T-cell (primary cell): ENCODE measurements at regions of chr22 and their contacts with region 1.

Region 1: GRCh38 chr22:24230911-24231656 is 13.8 kb downstream of the GGT5 start:
- DNase-seq: peak in 34 of 35 experiments; percentile 28 to 71 (median 52)
- ATAC-seq: peak; percentile 66 to 73 (median 70)
- H3K4me3 ChIP-seq: no peak overlapping the region
- H3K4me3 Mint-ChIP-seq: no peak overlapping the region
- H3K27ac ChIP-seq: no peak overlapping the region
- H3K27ac Mint-ChIP-seq: peak overlapping the region in 1 of 2 donors; percentile 49
- H3K4me1 ChIP-seq: peaks cover 0 to 4% of the 10 kb centered on the region in 2 experiments
- H3K4me1 Mint-ChIP-seq: peaks cover 3 to 6% (median 3%) of the 10 kb centered on the region in 3 donors
- H3K27me3 ChIP-seq: peaks cover 0 to 7% of the 10 kb centered on the region in 2 experiments
- H3K27me3 Mint-ChIP-seq: no peaks in the 10 kb centered on the region

Region 2: GRCh38 chr22:24037851-24038765 is 193.0 kb before region 1 on chr22:
- CTCF ChIA-PET with region 1: no interaction called
- POLR2A ChIA-PET with region 1: interaction called in 1 of 2 experiments, 10 read pairs
- DNase-seq: peak in 33 of 35 experiments; percentile 16 to 76 (median 50)
- ATAC-seq: peak; percentile 95 to 97 (median 96)
- H3K4me3 ChIP-seq: no peak overlapping the region
- H3K4me3 Mint-ChIP-seq: peak overlapping the region; percentile 34 to 74 (median 54)
- H3K27ac ChIP-seq: peak overlapping the region; percentile 31
- H3K27ac Mint-ChIP-seq: peak overlapping the region; percentile 92 to 94
- H3K4me1 ChIP-seq: peaks cover 31 to 39% of the 10 kb centered on the region in 2 experiments
- H3K4me1 Mint-ChIP-seq: peaks cover 58 to 76% (median 67%) of the 10 kb centered on the region in 3 donors
- H3K27me3 ChIP-seq: no peaks in the 10 kb centered on the region
- H3K27me3 Mint-ChIP-seq: no peaks in the 10 kb centered on the region

Region 3: GRCh38 chr22:24289114-24289513 is 58.0 kb after region 1 on chr22:
- CTCF ChIA-PET with region 1: no interaction called
- POLR2A ChIA-PET with region 1: no interaction called
- DNase-seq: no peak
- ATAC-seq: no peak
- H3K4me3 ChIP-seq: no peak overlapping the region
- H3K4me3 Mint-ChIP-seq: no peak overlapping the region
- H3K27ac ChIP-seq: no peak overlapping the region
- H3K27ac Mint-ChIP-seq: no peak overlapping the region
- H3K4me1 ChIP-seq: peaks cover 17 to 18% of the 10 kb centered on the region in 2 experiments
- H3K4me1 Mint-ChIP-seq: peaks cover 52 to 58% (median 56%) of the 10 kb centered on the region in 3 donors
- H3K27me3 ChIP-seq: no peaks in the 10 kb centered on the region
- H3K27me3 Mint-ChIP-seq: no peaks in the 10 kb centered on the region

Region 4: DNA sequence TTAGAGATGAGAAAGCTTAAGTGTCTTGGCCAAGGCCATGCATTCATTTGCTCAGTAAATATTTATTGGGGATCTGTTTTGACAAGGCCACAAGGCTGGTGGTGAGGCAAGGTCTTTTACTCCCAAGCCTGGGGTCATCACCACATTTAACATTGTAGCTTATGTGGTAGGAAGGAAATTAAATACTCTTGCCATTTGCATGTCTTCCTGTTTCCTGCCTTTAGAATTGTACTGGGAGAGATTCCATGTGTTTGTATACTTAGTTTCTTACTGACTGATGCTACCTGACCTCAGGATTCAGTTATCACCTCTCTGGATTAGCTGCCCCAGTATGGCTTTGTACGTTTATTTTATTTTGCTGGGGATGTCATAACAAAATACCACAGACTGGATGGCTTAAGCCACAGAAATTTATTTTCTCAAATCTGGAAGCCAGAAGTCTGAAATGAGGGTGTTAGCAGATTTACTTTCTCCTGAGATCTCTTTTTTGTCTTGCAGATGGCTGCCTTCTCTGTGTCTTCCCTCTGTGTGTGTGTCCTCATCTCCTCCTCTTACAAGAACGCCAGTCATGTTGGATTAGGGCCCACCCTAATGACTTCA is 84.4 kb after region 1 on chr22:
- CTCF ChIA-PET with region 1: no interaction called
- POLR2A ChIA-PET with region 1: no interaction called
- DNase-seq: no peak
- ATAC-seq: no peak
- H3K4me3 ChIP-seq: no peak overlapping the region
- H3K4me3 Mint-ChIP-seq: no peak overlapping the region
- H3K27ac ChIP-seq: no peak overlapping the region
- H3K27ac Mint-ChIP-seq: peak overlapping the region in 1 of 2 donors; percentile 28
- H3K4me1 ChIP-seq: no peaks in the 10 kb centered on the region
- H3K4me1 Mint-ChIP-seq: peaks cover 0 to 7% (median 3%) of the 10 kb centered on the region in 3 donors
- H3K27me3 ChIP-seq: no peaks in the 10 kb centered on the region
- H3K27me3 Mint-ChIP-seq: no peaks in the 10 kb centered on the region